ENCODE measurements at regions of chr3 and their contacts with region 1.

Region 1: GRCh38 chr3:44729384-44729910 is at the start of gene ZNF501:
- DNase-seq: peak; percentile 70 to 87 (median 75)
- H3K4me3 ChIP-seq: peak within 1 kb of the TSS; percentile 87
- H3K4me3 Mint-ChIP-seq: peak within 1 kb of the TSS; percentile 91 to 97 (median 94)
- H3K27ac ChIP-seq: peak within 1 kb of the TSS; percentile 28
- H3K27ac Mint-ChIP-seq: peak within 1 kb of the TSS; percentile 49 to 96 (median 86)
- H3K4me1 ChIP-seq: peaks cover 10% of the 10 kb centered on the region
- H3K4me1 Mint-ChIP-seq: peaks cover 14 to 16% (median 15%) of the 10 kb centered on the region in 3 donors
- H3K27me3 ChIP-seq: no peaks in the 10 kb centered on the region
- H3K27me3 Mint-ChIP-seq: no peaks in the 10 kb centered on the region
- total RNA-seq, gene ZNF501: 4.9 to 6.0 TPM

Region 2: DNA sequence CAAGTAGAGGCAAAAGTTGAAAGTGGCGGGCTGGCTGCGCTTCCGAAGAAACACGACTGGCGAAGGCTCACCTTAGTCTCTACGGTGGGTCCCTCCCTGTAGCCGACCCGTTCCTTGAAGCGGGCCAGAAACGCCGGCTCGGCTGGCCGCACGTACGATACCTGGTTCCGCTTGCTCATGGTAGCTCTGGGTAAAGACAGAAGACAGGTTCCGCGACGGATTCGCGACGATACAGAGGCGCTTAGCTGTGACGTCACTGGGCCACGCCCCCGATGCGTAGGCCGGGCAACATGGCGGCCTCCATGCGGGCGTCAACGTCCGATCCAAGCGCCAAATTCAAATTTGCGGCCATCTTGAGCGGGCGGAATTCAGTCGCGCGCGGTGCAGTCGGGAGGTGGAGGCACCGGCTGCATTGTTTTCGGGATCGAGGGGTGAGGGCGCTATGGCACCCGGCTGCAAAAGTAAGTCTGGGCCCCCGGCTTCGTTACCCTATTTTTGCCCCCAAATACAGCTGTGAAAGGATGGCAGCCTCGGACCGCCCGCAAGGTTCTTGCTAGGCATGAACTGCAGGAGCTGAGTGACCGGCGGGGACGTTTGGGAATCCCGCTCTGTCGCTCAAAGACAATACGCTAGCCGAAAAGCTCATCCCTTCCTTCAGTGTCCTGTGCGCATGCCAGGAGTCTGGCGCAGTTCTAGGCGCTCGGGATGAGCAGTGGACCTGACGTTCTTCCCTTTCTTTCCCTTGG is 32.1 kb after region 1 on chr3 and contains the starts of genes KIAA1143 and KIF15:
- CTCF ChIA-PET with region 1: interaction called, 17 read pairs
- POLR2A ChIA-PET with region 1: interaction called, 6 read pairs
- DNase-seq: peak; percentile 91 to 97 (median 96)
- H3K4me3 ChIP-seq: peak within 1 kb of the TSS; percentile 95
- H3K4me3 Mint-ChIP-seq: peak within 1 kb of the TSS; percentile 91 to 97 (median 94)
- H3K27ac ChIP-seq: peak within 1 kb of the TSS; percentile 96
- H3K27ac Mint-ChIP-seq: peak within 1 kb of the TSS; percentile 89 to 95 (median 92)
- H3K4me1 ChIP-seq: peaks cover 9% of the 10 kb centered on the region
- H3K4me1 Mint-ChIP-seq: peaks cover 28 to 54% (median 48%) of the 10 kb centered on the region in 3 donors
- H3K27me3 ChIP-seq: no peaks in the 10 kb centered on the region
- H3K27me3 Mint-ChIP-seq: peaks cover 0 to 5% of the 10 kb centered on the region in 2 donors
- total RNA-seq, gene KIAA1143: 38.9 to 41.7 TPM
- total RNA-seq, gene KIF15: 21.7 to 23.6 TPM

Region 3: GRCh38 chr3:45154641-45155147 is 425.2 kb after region 1 on chr3:
- CTCF ChIA-PET with region 1: no interaction called
- POLR2A ChIA-PET with region 1: no interaction called
- DNase-seq: no peak
- H3K4me3 ChIP-seq: no peak overlapping the region
- H3K4me3 Mint-ChIP-seq: no peak overlapping the region
- H3K27ac ChIP-seq: no peak overlapping the region
- H3K27ac Mint-ChIP-seq: no peak overlapping the region
- H3K4me1 ChIP-seq: no peaks in the 10 kb centered on the region
- H3K4me1 Mint-ChIP-seq: no peaks in the 10 kb centered on the region
- H3K27me3 ChIP-seq: no peaks in the 10 kb centered on the region
- H3K27me3 Mint-ChIP-seq: peaks cover 11 to 22% of the 10 kb centered on the region in 2 donors

Measured in CD8-positive, alpha-beta memory T cell (primary cell).